Naive thymus-derived CD4-positive, alpha-beta T cell (primary cell): ENCODE measurements at regions of chr11 and their contacts with region 1.

Region 1: DNA sequence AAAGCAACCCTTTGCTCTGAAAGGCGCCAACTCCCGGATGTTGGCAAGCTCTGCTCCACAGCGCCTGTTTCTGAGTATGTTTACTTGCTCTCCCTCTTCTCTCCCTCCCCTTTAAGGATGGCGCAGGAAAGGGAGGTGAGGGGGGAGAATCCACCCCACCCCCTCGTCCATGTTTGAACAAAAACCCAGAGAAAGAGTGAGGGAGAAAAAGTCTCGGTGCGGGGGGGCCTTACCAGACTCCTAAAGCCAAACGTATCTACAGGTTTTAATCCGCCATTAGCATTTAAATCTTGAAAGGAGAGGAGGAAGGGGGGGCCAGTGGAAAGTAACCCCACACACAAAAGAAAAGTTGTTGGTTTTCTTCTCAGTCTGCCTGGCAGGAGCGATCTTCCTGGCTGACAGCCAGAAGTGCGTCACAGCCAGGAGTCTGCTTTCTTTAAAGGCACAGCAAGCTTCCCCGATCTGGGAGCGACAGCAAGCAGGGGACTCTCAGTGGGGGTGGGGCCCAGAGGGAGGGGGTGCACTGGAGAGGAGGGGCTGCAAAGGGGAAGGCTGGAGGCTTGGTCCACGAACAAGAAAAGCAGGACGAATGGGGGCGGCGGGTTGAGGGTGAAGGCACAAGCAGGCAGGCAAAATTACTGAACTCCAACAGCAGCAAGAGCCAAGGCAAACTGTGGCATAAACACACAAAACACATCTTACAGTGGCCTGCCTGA is 39.5 kb downstream of the NUMA1 start:
- DNase-seq: peak; percentile 51 to 91 (median 86)
- ATAC-seq: peak; percentile 84
- H3K4me3 ChIP-seq: peak overlapping the region; percentile 89
- H3K4me3 Mint-ChIP-seq: no peak overlapping the region
- H3K27ac ChIP-seq: peak overlapping the region; percentile 88
- H3K27ac Mint-ChIP-seq: no peak overlapping the region
- H3K4me1 ChIP-seq: peaks cover 48 to 57% of the 10 kb centered on the region in 2 donors
- H3K4me1 Mint-ChIP-seq: peaks cover 19 to 53% (median 41%) of the 10 kb centered on the region in 7 donors
- H3K27me3 ChIP-seq: no peaks in the 10 kb centered on the region
- H3K27me3 Mint-ChIP-seq: no peaks in the 10 kb centered on the region

Region 2: GRCh38 chr11:70742553-70743291 is 1298.2 kb before region 1 on chr11:
- CTCF ChIA-PET with region 1: no interaction called
- POLR2A ChIA-PET with region 1: no interaction called
- intact Hi-C with region 1: no loop called
- DNase-seq: no peak
- ATAC-seq: no peak
- H3K4me3 ChIP-seq: no peak overlapping the region
- H3K4me3 Mint-ChIP-seq: no peak overlapping the region
- H3K27ac ChIP-seq: no peak overlapping the region
- H3K27ac Mint-ChIP-seq: no peak overlapping the region
- H3K4me1 ChIP-seq: no peaks in the 10 kb centered on the region
- H3K4me1 Mint-ChIP-seq: no peaks in the 10 kb centered on the region
- H3K27me3 ChIP-seq: no peaks in the 10 kb centered on the region
- H3K27me3 Mint-ChIP-seq: peaks cover 0 to 27% (median 8%) of the 10 kb centered on the region in 5 donors

Region 3: GRCh38 chr11:71448257-71449171 is 592.4 kb before region 1 on chr11 and contains the start of gene DHCR7:
- CTCF ChIA-PET with region 1: no interaction called
- POLR2A ChIA-PET with region 1: no interaction called
- intact Hi-C with region 1: loop called in 1 of 2 experiments (anchors 5 kb)
- DNase-seq: peak; percentile 81 to 96 (median 88)
- ATAC-seq: peak; percentile 85
- H3K4me3 ChIP-seq: peak within 1 kb of the TSS; percentile 86
- H3K4me3 Mint-ChIP-seq: peak within 1 kb of the TSS; percentile 89 to 98 (median 94)
- H3K27ac ChIP-seq: peak within 1 kb of the TSS; percentile 92
- H3K27ac Mint-ChIP-seq: peak within 1 kb of the TSS; percentile 88 to 99 (median 95)
- H3K4me1 ChIP-seq: peaks cover 27 to 37% of the 10 kb centered on the region in 2 donors
- H3K4me1 Mint-ChIP-seq: peaks cover 27 to 58% (median 49%) of the 10 kb centered on the region in 7 donors
- H3K27me3 ChIP-seq: no peaks in the 10 kb centered on the region
- H3K27me3 Mint-ChIP-seq: no peaks in the 10 kb centered on the region
- total RNA-seq, gene DHCR7: 14.7 to 46.1 (median 19.6) TPM

Region 4: GRCh38 chr11:71928737-71929452 is 112.0 kb before region 1 on chr11 and contains the start of gene RNF121:
- CTCF ChIA-PET with region 1: no interaction called
- POLR2A ChIA-PET with region 1: interaction called, 14 read pairs
- intact Hi-C with region 1: loop called in 1 of 2 experiments (anchors 1 kb)
- DNase-seq: peak; percentile 91 to 99 (median 96)
- ATAC-seq: peak; percentile 97
- H3K4me3 ChIP-seq: peak within 1 kb of the TSS; percentile 97
- H3K4me3 Mint-ChIP-seq: peak within 1 kb of the TSS; percentile 92 to 100 (median 98)
- H3K27ac ChIP-seq: peak within 1 kb of the TSS; percentile 88
- H3K27ac Mint-ChIP-seq: peak within 1 kb of the TSS; percentile 94 to 100 (median 98)
- H3K4me1 ChIP-seq: peaks cover 17 to 22% of the 10 kb centered on the region in 2 donors
- H3K4me1 Mint-ChIP-seq: peaks cover 26 to 70% (median 60%) of the 10 kb centered on the region in 7 donors
- H3K27me3 ChIP-seq: no peaks in the 10 kb centered on the region
- H3K27me3 Mint-ChIP-seq: no peaks in the 10 kb centered on the region
- total RNA-seq, gene RNF121: 18.2 to 37.2 (median 29.2) TPM

Region 5: GRCh38 chr11:72024069-72024754 is 16.7 kb before region 1 on chr11:
- CTCF ChIA-PET with region 1: interaction called, 71 read pairs
- POLR2A ChIA-PET with region 1: interaction called, 190 read pairs
- intact Hi-C with region 1: loop called (anchors 1 to 2 kb)
- DNase-seq: no peak
- ATAC-seq: no peak
- H3K4me3 ChIP-seq: no peak overlapping the region
- H3K4me3 Mint-ChIP-seq: no peak overlapping the region
- H3K27ac ChIP-seq: peak overlapping the region; percentile 6
- H3K27ac Mint-ChIP-seq: peak overlapping the region in 5 of 9 donors; percentile 14 to 79 (median 33)
- H3K4me1 ChIP-seq: peaks cover 6 to 13% of the 10 kb centered on the region in 2 donors
- H3K4me1 Mint-ChIP-seq: peaks cover 18 to 47% (median 39%) of the 10 kb centered on the region in 7 donors
- H3K27me3 ChIP-seq: no peaks in the 10 kb centered on the region
- H3K27me3 Mint-ChIP-seq: no peaks in the 10 kb centered on the region

Region 6: GRCh38 chr11:72080256-72080974 is 39.5 kb after region 1 on chr11 and contains the starts of genes LRRC51 and NUMA1:
- CTCF ChIA-PET with region 1: interaction called, 16 read pairs
- POLR2A ChIA-PET with region 1: interaction called, 36 read pairs
- intact Hi-C with region 1: loop called (anchors 1 kb)
- DNase-seq: peak; percentile 88 to 100 (median 99)
- ATAC-seq: peak; percentile 94
- H3K4me3 ChIP-seq: peak within 1 kb of the TSS; percentile 88
- H3K4me3 Mint-ChIP-seq: peak within 1 kb of the TSS; percentile 80 to 95 (median 92)
- H3K27ac ChIP-seq: peak within 1 kb of the TSS; percentile 80
- H3K27ac Mint-ChIP-seq: peak within 1 kb of the TSS; percentile 93 to 100 (median 97)
- H3K4me1 ChIP-seq: peaks cover 10% of the 10 kb centered on the region in 2 donors
- H3K4me1 Mint-ChIP-seq: peaks cover 30 to 62% (median 58%) of the 10 kb centered on the region in 7 donors
- H3K27me3 ChIP-seq: no peaks in the 10 kb centered on the region
- H3K27me3 Mint-ChIP-seq: no peaks in the 10 kb centered on the region
- total RNA-seq, gene LRRC51: 1.2 to 7.8 (median 4.6) TPM
- total RNA-seq, gene NUMA1: 216 to 453 (median 266) TPM

Region 7: DNA sequence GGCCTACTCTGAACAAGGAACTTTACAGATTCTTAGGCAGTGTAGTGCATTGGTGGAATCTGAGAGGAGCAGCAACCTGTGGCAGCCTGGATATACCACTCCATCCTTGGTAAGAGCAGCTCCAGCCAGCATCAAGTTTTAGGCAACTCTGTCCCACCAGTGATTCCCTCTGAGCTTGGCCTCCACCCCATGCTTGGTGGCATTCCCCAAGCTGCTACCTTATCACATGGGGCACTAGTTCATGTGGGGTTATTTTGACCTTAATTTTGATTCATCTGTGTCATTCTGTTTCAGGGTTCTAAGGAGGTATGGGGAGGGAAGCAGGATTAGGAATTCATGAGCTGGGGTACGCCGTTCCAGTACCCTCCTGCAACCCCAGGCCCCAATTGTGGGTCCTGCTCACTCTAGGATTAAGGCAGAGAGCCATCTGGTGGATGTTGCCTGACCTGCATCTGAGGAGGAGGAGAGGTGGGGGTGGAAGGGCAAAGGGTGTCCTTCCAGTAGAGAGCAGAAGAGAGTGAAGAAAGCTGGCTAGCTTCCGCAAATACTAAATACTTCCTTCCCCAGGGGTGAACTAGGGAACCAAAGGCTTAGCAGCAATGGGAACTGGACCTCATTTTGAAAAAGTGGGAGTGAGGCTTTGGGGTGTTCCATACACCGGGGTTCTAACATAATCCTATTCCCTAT is 50.3 kb after region 1 on chr11:
- CTCF ChIA-PET with region 1: interaction called, 19 read pairs
- POLR2A ChIA-PET with region 1: interaction called, 56 read pairs
- intact Hi-C with region 1: loop called in 1 of 2 experiments (anchors 1 kb)
- DNase-seq: peak; percentile 50 to 79 (median 74)
- ATAC-seq: peak; percentile 99
- H3K4me3 ChIP-seq: no peak overlapping the region
- H3K4me3 Mint-ChIP-seq: no peak overlapping the region
- H3K27ac ChIP-seq: peak overlapping the region; percentile 14
- H3K27ac Mint-ChIP-seq: peak overlapping the region in 8 of 9 donors; percentile 18 to 90 (median 64)
- H3K4me1 ChIP-seq: peaks cover 0 to 3% of the 10 kb centered on the region in 2 donors
- H3K4me1 Mint-ChIP-seq: peaks cover 11 to 18% (median 13%) of the 10 kb centered on the region in 7 donors
- H3K27me3 ChIP-seq: no peaks in the 10 kb centered on the region
- H3K27me3 Mint-ChIP-seq: no peaks in the 10 kb centered on the region

Region 8: GRCh38 chr11:72112321-72113219 is 71.7 kb after region 1 on chr11 and contains the start of gene ANAPC15:
- CTCF ChIA-PET with region 1: interaction called, 3 read pairs
- POLR2A ChIA-PET with region 1: interaction called, 69 read pairs
- intact Hi-C with region 1: loop called (anchors 1 kb)
- DNase-seq: peak; percentile 83 to 100 (median 99)
- ATAC-seq: peak; percentile 91
- H3K4me3 ChIP-seq: peak within 1 kb of the TSS; percentile 85
- H3K4me3 Mint-ChIP-seq: peak within 1 kb of the TSS; percentile 73 to 100 (median 96)
- H3K27ac ChIP-seq: peak within 1 kb of the TSS; percentile 92
- H3K27ac Mint-ChIP-seq: peak within 1 kb of the TSS; percentile 97 to 100 (median 98)
- H3K4me1 ChIP-seq: peaks cover 12 to 14% of the 10 kb centered on the region in 2 donors
- H3K4me1 Mint-ChIP-seq: peaks cover 12 to 29% (median 25%) of the 10 kb centered on the region in 7 donors
- H3K27me3 ChIP-seq: no peaks in the 10 kb centered on the region
- H3K27me3 Mint-ChIP-seq: peaks cover 0 to 6% (median 0%) of the 10 kb centered on the region in 5 donors
- total RNA-seq, gene ANAPC15: 43.0 to 59.6 (median 44.1) TPM